ENCODE measurements at regions of chr19 and their contacts with region 1.

Region 1: GRCh38 chr19:38374429-38375176 is at the start of gene PSMD8:
- DNase-seq: peak; percentile 91 to 99 (median 98)
- ATAC-seq: peak; percentile 95 to 96
- H3K4me3 Mint-ChIP-seq: peak within 1 kb of the TSS; percentile 94 to 100 (median 99)
- H3K27ac Mint-ChIP-seq: peak within 1 kb of the TSS; percentile 93 to 100 (median 98)
- H3K4me1 Mint-ChIP-seq: peaks cover 21 to 36% (median 32%) of the 10 kb centered on the region in 4 donors
- H3K27me3 Mint-ChIP-seq: peaks cover 0 to 12% (median 7%) of the 10 kb centered on the region in 5 donors
- polyA plus RNA-seq, gene PSMD8: 137 to 139 (median 137) TPM

Region 2: GRCh38 chr19:38243279-38243656 is 131.3 kb before region 1 on chr19:
- POLR2A ChIA-PET with region 1: interaction called, 19 read pairs
- DNase-seq: no peak
- ATAC-seq: no peak
- H3K4me3 Mint-ChIP-seq: peak overlapping the region in 4 of 10 donors; percentile 6 to 58 (median 40)
- H3K27ac Mint-ChIP-seq: peak overlapping the region in 3 of 10 donors; percentile 8 to 35 (median 27)
- H3K4me1 Mint-ChIP-seq: peaks cover 2 to 6% (median 4%) of the 10 kb centered on the region in 4 donors
- H3K27me3 Mint-ChIP-seq: peaks cover 0 to 10% (median 6%) of the 10 kb centered on the region in 5 donors

Region 3: GRCh38 chr19:38351865-38352395 is 22.7 kb before region 1 on chr19:
- POLR2A ChIA-PET with region 1: no interaction called
- DNase-seq: no peak
- ATAC-seq: no peak
- H3K4me3 Mint-ChIP-seq: no peak overlapping the region
- H3K27ac Mint-ChIP-seq: peak overlapping the region in 1 of 10 donors; percentile 17
- H3K4me1 Mint-ChIP-seq: peaks cover 0 to 2% (median 0%) of the 10 kb centered on the region in 4 donors
- H3K27me3 Mint-ChIP-seq: peaks cover 0 to 2% (median 0%) of the 10 kb centered on the region in 5 donors

Region 4: GRCh38 chr19:38387550-38388348 is 13.1 kb after region 1 on chr19 and contains the start of gene GGN:
- POLR2A ChIA-PET with region 1: interaction called, 48 read pairs
- DNase-seq: peak; percentile 55 to 85 (median 72)
- ATAC-seq: peak; percentile 74 to 75
- H3K4me3 Mint-ChIP-seq: peak within 1 kb of the TSS; percentile 81 to 97 (median 92)
- H3K27ac Mint-ChIP-seq: peak within 1 kb of the TSS; percentile 20 to 95 (median 82)
- H3K4me1 Mint-ChIP-seq: peaks cover 11 to 23% (median 21%) of the 10 kb centered on the region in 4 donors
- H3K27me3 Mint-ChIP-seq: peaks cover 10 to 44% (median 27%) of the 10 kb centered on the region in 5 donors
- polyA plus RNA-seq, gene GGN: not detected

Region 5: GRCh38 chr19:38402967-38403861 is 28.6 kb after region 1 on chr19 and contains the start of gene FAM98C:
- POLR2A ChIA-PET with region 1: interaction called, 38 read pairs
- DNase-seq: peak; percentile 95 to 99 (median 98)
- ATAC-seq: peak; percentile 94 to 95
- H3K4me3 Mint-ChIP-seq: peak within 1 kb of the TSS; percentile 86 to 96 (median 93)
- H3K27ac Mint-ChIP-seq: peak within 1 kb of the TSS; percentile 82 to 98 (median 94)
- H3K4me1 Mint-ChIP-seq: peaks cover 9 to 23% (median 19%) of the 10 kb centered on the region in 4 donors
- H3K27me3 Mint-ChIP-seq: peaks cover 0 to 8% (median 0%) of the 10 kb centered on the region in 5 donors
- polyA plus RNA-seq, gene FAM98C: 12.6 to 15.5 (median 15.4) TPM

Region 6: GRCh38 chr19:38496603-38497487 is 122.2 kb after region 1 on chr19:
- POLR2A ChIA-PET with region 1: no interaction called
- DNase-seq: no peak
- ATAC-seq: no peak
- H3K4me3 Mint-ChIP-seq: no peak overlapping the region
- H3K27ac Mint-ChIP-seq: no peak overlapping the region
- H3K4me1 Mint-ChIP-seq: peaks cover 0 to 5% (median under 1%) of the 10 kb centered on the region in 4 donors
- H3K27me3 Mint-ChIP-seq: peaks cover 2 to 18% (median 12%) of the 10 kb centered on the region in 5 donors

Measured in naive thymus-derived CD8-positive, alpha-beta T cell (primary cell).